CD8-positive, alpha-beta T cell (primary cell): ENCODE measurements at regions of chr20 and their contacts with region 1.

Region 1: DNA sequence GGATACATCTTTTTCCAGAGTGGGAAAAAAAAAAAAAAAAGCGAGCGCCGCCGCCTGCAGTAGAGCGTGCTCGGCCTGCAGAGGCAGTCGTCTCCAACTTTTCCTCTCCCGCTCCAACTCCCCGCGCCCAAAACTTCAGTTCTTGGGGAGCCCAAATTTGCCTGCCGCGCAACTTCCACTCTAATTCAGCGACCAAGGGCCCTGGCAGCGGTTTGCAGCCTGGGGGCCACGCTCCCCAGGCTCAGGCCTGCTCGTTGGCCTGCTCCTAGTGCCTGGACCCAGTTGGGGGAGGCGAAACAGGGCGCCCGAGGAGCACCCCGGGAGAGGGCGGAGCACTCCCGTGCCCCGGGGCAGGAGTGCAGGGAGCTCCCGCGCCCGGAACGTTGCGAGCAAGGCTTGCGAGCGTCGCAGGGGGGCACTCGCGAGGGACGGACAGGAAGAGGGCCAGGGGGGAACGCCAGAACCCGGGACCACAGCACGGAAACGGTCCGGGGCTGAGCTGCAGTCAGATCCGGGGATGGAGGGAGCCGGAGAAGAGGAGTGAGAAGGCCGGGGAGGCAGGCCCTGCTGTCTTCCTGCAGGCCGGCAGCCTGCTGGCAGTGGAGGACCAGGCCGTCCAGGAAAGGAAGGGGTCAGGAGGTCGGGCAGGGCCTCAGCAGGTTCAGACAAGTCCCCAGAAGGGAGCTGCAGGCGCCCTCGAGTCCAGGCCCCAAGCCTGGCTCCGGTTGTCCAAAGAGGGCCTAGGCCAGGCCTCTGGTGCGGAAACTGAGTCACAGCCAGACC is at the start of gene STX16:
- DNase-seq: peak; percentile 76 to 95 (median 86)
- ATAC-seq: peak; percentile 63
- H3K4me3 ChIP-seq: peak within 1 kb of the TSS; percentile 86 to 96
- H3K4me3 Mint-ChIP-seq: peak within 1 kb of the TSS; percentile 99
- H3K27ac ChIP-seq: peak within 1 kb of the TSS; percentile 87 to 92
- H3K27ac Mint-ChIP-seq: peak within 1 kb of the TSS; percentile 99
- H3K4me1 ChIP-seq: peaks cover 30% of the 10 kb centered on the region
- H3K4me1 Mint-ChIP-seq: peaks cover 27% of the 10 kb centered on the region
- H3K27me3 ChIP-seq: no peaks in the 10 kb centered on the region
- H3K27me3 Mint-ChIP-seq: no peaks in the 10 kb centered on the region
- CTCF ChIP-seq: peak; percentile 88
- total RNA-seq, gene STX16: 161 to 177 TPM

Region 2: GRCh38 chr20:57628047-57628961 is 1022.7 kb before region 1 on chr20:
- CTCF ChIA-PET with region 1: no interaction called
- POLR2A ChIA-PET with region 1: interaction called, 3 read pairs
- intact Hi-C with region 1: loop called (anchors 5 kb)
- DNase-seq: peak; percentile 40 to 92 (median 67)
- ATAC-seq: peak; percentile 80
- H3K4me3 ChIP-seq: peak overlapping the region; percentile 31 to 44
- H3K4me3 Mint-ChIP-seq: peak overlapping the region; percentile 94
- H3K27ac ChIP-seq: peak overlapping the region; percentile 71 to 91
- H3K27ac Mint-ChIP-seq: peak overlapping the region; percentile 99
- H3K4me1 ChIP-seq: peaks cover 61% of the 10 kb centered on the region
- H3K4me1 Mint-ChIP-seq: peaks cover 74% of the 10 kb centered on the region
- H3K27me3 ChIP-seq: no peaks in the 10 kb centered on the region
- H3K27me3 Mint-ChIP-seq: no peaks in the 10 kb centered on the region
- CTCF ChIP-seq: no peak

Region 3: DNA sequence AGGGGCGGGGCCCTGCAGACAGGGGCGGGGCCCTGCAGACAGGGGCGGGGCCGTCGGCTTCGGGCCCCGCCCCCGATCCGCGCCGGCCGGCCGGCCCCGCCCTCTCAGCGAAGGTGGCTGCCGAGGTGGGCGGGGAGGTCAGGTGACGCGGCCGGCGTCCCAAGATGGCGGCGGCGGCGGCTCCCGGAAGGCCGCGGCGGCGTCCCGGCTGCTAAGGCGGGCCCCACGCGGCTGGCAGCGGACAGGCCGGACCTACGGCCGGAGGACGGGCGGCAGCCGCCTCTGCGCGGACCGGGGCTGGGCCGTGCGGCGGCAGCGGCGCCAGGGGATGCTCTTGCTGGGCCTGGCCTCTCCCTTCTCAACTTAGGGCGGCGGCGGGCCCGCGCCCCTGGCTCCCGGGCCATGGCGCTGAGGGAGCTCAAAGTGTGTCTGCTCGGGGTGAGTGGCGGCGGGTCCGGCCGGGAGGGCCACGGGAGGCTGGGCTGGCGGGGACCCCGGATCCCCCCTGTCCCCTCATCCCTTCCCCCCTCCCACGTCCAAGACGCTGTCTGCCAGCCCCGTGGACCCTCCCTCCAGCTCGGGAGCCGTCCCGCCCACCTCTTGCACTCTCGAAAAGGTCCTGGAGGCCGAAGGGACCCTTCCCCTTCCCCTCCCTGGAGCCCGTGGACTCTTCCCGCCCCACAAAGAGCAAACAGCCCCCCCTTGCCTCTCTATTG is 341.2 kb before region 1 on chr20 and contains the start of gene RAB22A:
- CTCF ChIA-PET with region 1: no interaction called
- POLR2A ChIA-PET with region 1: interaction called, 4 read pairs
- intact Hi-C with region 1: loop called (anchors 2 kb)
- DNase-seq: peak; percentile 55 to 92 (median 82)
- ATAC-seq: peak; percentile 61
- H3K4me3 ChIP-seq: peak within 1 kb of the TSS; percentile 72 to 77
- H3K4me3 Mint-ChIP-seq: peak within 1 kb of the TSS; percentile 91
- H3K27ac ChIP-seq: peak within 1 kb of the TSS; percentile 71 to 84
- H3K27ac Mint-ChIP-seq: peak within 1 kb of the TSS; percentile 96
- H3K4me1 ChIP-seq: peaks cover 61% of the 10 kb centered on the region
- H3K4me1 Mint-ChIP-seq: peaks cover 62% of the 10 kb centered on the region
- H3K27me3 ChIP-seq: no peaks in the 10 kb centered on the region
- H3K27me3 Mint-ChIP-seq: no peaks in the 10 kb centered on the region
- CTCF ChIP-seq: no peak
- total RNA-seq, gene RAB22A: 19.0 to 22.8 TPM

Region 4: GRCh38 chr20:58458180-58459057 is 192.5 kb before region 1 on chr20:
- CTCF ChIA-PET with region 1: no interaction called
- POLR2A ChIA-PET with region 1: no interaction called
- intact Hi-C with region 1: no loop called
- DNase-seq: no peak
- ATAC-seq: no peak
- H3K4me3 ChIP-seq: no peak overlapping the region
- H3K4me3 Mint-ChIP-seq: no peak overlapping the region
- H3K27ac ChIP-seq: no peak overlapping the region
- H3K27ac Mint-ChIP-seq: no peak overlapping the region
- H3K4me1 ChIP-seq: no peaks in the 10 kb centered on the region
- H3K4me1 Mint-ChIP-seq: no peaks in the 10 kb centered on the region
- H3K27me3 ChIP-seq: no peaks in the 10 kb centered on the region
- H3K27me3 Mint-ChIP-seq: no peaks in the 10 kb centered on the region
- CTCF ChIP-seq: no peak

Region 5: DNA sequence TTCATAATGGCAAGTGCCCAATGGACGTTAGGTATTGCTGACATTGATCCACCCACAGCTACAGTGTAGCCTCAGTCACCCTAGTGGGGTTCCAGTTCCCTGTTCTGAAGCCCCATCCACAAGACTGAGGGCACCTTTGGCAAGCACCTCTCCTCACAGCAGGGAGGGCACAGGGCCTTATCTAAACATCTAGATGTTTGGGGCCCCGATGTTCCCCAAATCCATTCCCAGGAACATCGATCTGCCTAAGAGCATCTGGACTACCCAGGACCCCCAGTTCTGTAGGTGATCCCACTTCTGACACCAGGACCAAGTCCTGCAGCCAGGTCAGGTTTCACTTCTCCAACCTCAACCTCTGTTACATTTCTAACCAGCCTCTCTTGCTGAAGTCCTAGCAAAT is 146.4 kb before region 1 on chr20:
- CTCF ChIA-PET with region 1: no interaction called
- POLR2A ChIA-PET with region 1: no interaction called
- intact Hi-C with region 1: no loop called
- DNase-seq: no peak
- ATAC-seq: no peak
- H3K4me3 ChIP-seq: no peak overlapping the region
- H3K4me3 Mint-ChIP-seq: no peak overlapping the region
- H3K27ac ChIP-seq: no peak overlapping the region
- H3K27ac Mint-ChIP-seq: no peak overlapping the region
- H3K4me1 ChIP-seq: no peaks in the 10 kb centered on the region
- H3K4me1 Mint-ChIP-seq: no peaks in the 10 kb centered on the region
- H3K27me3 ChIP-seq: no peaks in the 10 kb centered on the region
- H3K27me3 Mint-ChIP-seq: no peaks in the 10 kb centered on the region
- CTCF ChIP-seq: no peak

Region 6: GRCh38 chr20:58850693-58851174 is 199.8 kb after region 1 on chr20 and contains the start of gene GNAS-AS1:
- CTCF ChIA-PET with region 1: interaction called, 5 read pairs
- POLR2A ChIA-PET with region 1: interaction called, 7 read pairs
- intact Hi-C with region 1: loop called (anchors 1 to 2 kb)
- DNase-seq: peak; percentile 61 to 87 (median 79)
- ATAC-seq: peak; percentile 91
- H3K4me3 ChIP-seq: peak within 1 kb of the TSS; percentile 48 to 55
- H3K4me3 Mint-ChIP-seq: peak within 1 kb of the TSS; percentile 91
- H3K27ac ChIP-seq: no peak within 1 kb of the TSS
- H3K27ac Mint-ChIP-seq: peak within 1 kb of the TSS; percentile 52
- H3K4me1 ChIP-seq: peaks cover 37% of the 10 kb centered on the region
- H3K4me1 Mint-ChIP-seq: peaks cover 32% of the 10 kb centered on the region
- H3K27me3 ChIP-seq: peaks cover 11 to 29% of the 10 kb centered on the region in 2 experiments
- H3K27me3 Mint-ChIP-seq: peaks cover 14% of the 10 kb centered on the region
- CTCF ChIP-seq: no peak
- total RNA-seq, gene GNAS-AS1: 0.28 TPM in 1 of 2 experiments, not detected in the other

Region 7: DNA sequence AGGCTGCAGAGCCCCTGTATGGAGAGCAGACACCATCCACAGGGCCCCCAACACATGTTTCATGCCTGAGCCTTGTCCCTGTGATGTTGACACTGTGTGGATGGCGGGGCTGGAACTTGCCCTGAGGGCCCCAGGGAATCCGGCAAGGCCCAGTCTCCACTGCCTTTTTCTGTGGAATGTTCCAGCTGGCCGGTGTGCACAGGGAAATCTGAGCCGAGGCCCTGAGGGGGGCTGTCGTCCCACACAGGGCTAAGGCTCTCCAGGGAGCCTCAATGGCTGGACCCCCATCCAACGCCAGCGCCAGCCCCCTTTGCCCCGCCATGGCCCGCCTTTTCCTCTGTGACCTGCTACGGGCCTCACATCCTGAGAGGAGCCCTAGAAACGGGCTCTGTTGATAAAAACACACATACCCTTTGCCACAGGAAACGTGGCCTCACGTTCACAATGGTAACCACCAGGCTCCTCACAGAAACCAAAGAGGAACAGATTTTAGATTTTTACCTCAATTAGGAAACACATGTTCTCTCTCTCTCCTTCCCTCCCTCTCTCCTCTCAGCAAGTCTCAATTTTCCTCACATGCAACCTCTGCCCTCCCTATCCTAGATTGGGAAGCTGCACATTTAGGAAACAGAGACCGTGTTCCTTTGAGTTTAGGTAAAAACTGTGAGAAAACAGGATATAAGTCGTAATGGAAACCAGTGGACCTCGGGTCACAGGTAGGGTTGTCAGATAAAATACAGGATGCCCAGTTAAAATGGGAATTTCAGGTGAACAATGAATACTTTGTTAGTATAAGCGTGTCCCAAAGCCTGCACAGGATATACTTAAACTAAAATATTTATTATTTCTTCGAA is 498.9 kb after region 1 on chr20:
- CTCF ChIA-PET with region 1: no interaction called
- POLR2A ChIA-PET with region 1: no interaction called
- intact Hi-C with region 1: loop called in 1 of 2 experiments (anchors 5 kb)
- DNase-seq: peak; percentile 66 to 96 (median 77)
- ATAC-seq: peak; percentile 74
- H3K4me3 ChIP-seq: peak overlapping the region in 1 of 2 experiments; percentile 21
- H3K4me3 Mint-ChIP-seq: peak overlapping the region; percentile 71
- H3K27ac ChIP-seq: peak overlapping the region; percentile 90 to 94
- H3K27ac Mint-ChIP-seq: peak overlapping the region; percentile 95
- H3K4me1 ChIP-seq: peaks cover 94% of the 10 kb centered on the region
- H3K4me1 Mint-ChIP-seq: peaks cover 94% of the 10 kb centered on the region
- H3K27me3 ChIP-seq: no peaks in the 10 kb centered on the region
- H3K27me3 Mint-ChIP-seq: no peaks in the 10 kb centered on the region
- CTCF ChIP-seq: no peak

Region 8: DNA sequence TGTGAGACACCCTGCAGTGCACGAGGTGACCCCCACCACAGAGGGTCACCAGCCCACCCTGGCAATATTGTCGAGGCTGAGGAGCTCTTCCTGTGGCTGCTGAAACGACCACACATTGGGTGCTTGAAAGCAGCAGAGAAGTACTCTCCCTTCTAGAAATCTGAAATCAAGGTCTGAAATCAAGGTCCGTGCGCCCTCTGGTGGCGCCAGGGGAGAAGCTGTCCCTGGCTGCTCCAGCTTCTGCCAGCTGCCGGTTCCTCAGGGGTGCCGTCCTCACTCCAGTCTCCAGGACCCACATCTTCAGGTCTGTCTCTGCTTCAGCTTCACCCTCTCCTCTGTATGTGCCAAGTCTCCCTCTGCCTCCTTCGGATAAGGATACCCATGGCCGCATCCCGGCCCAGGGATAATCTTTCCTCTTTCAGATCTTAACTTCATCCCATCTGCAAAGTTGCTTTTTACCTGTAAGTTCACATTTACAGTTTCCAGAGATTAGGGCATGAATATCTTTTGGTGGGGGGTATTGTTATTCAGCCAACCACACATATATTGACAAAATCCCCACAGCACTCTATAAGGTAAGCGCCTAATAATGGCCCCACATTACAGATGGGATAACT is 845.0 kb after region 1 on chr20:
- CTCF ChIA-PET with region 1: interaction called, 3 read pairs
- POLR2A ChIA-PET with region 1: no interaction called
- intact Hi-C with region 1: loop called in 1 of 2 experiments (anchors 5 kb)
- DNase-seq: peak; percentile 41 to 80 (median 66)
- ATAC-seq: peak; percentile 36
- H3K4me3 ChIP-seq: no peak overlapping the region
- H3K4me3 Mint-ChIP-seq: no peak overlapping the region
- H3K27ac ChIP-seq: no peak overlapping the region
- H3K27ac Mint-ChIP-seq: no peak overlapping the region
- H3K4me1 ChIP-seq: no peaks in the 10 kb centered on the region
- H3K4me1 Mint-ChIP-seq: no peaks in the 10 kb centered on the region
- H3K27me3 ChIP-seq: peaks cover 0 to 2% of the 10 kb centered on the region in 2 experiments
- H3K27me3 Mint-ChIP-seq: peaks cover 21% of the 10 kb centered on the region
- CTCF ChIP-seq: peak; percentile 80